ENCODE measurements at regions of chrX and their contacts with region 1.

Region 1: GRCh38 chrX:22135994-22136684 is 104.0 kb downstream of the PHEX start:
- DNase-seq: peak in 5 of 9 experiments; percentile 3 to 56 (median 25)
- ATAC-seq: no peak
- H3K4me3 ChIP-seq: no peak overlapping the region
- H3K4me3 Mint-ChIP-seq: peak overlapping the region; percentile 71
- H3K27ac ChIP-seq: no peak overlapping the region
- H3K27ac Mint-ChIP-seq: no peak overlapping the region
- H3K4me1 ChIP-seq: no peaks in the 10 kb centered on the region
- H3K4me1 Mint-ChIP-seq: peaks cover 9% of the 10 kb centered on the region
- H3K27me3 ChIP-seq: no peaks in the 10 kb centered on the region
- H3K27me3 Mint-ChIP-seq: no peaks in the 10 kb centered on the region
- CTCF ChIP-seq: peak; percentile 57

Region 2: DNA sequence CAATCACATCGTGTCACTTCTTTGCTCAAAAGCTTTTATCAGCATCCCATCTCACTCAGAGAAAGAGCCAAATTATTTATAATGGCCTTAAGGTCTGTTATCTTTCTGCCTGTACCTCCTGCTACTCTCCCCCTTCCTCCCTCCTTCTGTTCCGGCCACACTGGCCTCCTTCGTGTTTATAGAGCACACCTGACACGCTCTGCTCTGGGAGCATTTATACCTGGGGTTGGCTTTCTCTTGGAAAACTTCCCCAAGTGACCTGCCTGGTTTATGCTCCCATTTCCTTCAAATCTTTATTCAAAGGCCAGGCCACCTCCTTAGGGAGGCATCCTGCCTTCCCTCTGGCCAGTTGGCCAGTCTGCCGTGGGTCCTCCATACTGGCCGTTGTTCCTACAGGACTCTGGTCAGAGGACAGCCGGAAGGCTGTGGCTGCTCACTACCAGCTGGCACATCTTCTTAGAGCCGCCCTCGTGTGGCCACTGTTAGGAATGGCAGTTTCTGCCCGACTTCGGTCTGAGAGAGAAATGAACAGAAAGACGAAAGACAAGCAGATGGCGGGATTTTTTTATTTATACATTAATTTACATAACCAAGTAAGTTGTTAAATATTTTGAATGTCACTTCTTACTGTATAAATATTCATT is 56.4 kb after region 1 on chrX:
- CTCF ChIA-PET with region 1: interaction called, 8 read pairs
- POLR2A ChIA-PET with region 1: no interaction called
- intact Hi-C with region 1: loop called (anchors 1 to 5 kb)
- DNase-seq: peak; percentile 1 to 65 (median 39)
- ATAC-seq: peak; percentile 63
- H3K4me3 ChIP-seq: no peak overlapping the region
- H3K4me3 Mint-ChIP-seq: no peak overlapping the region
- H3K27ac ChIP-seq: no peak overlapping the region
- H3K27ac Mint-ChIP-seq: no peak overlapping the region
- H3K4me1 ChIP-seq: no peaks in the 10 kb centered on the region
- H3K4me1 Mint-ChIP-seq: peaks cover 3% of the 10 kb centered on the region
- H3K27me3 ChIP-seq: no peaks in the 10 kb centered on the region
- H3K27me3 Mint-ChIP-seq: peaks cover 2% of the 10 kb centered on the region
- CTCF ChIP-seq: peak; percentile 69

Region 3: GRCh38 chrX:22748093-22748999 is 612.2 kb after region 1 on chrX:
- CTCF ChIA-PET with region 1: interaction called, 4 read pairs
- POLR2A ChIA-PET with region 1: no interaction called
- intact Hi-C with region 1: loop called in 1 of 2 experiments (anchors 5 kb)
- DNase-seq: peak in 8 of 9 experiments; percentile 0 to 52 (median 23)
- ATAC-seq: peak; percentile 31
- H3K4me3 ChIP-seq: no peak overlapping the region
- H3K4me3 Mint-ChIP-seq: no peak overlapping the region
- H3K27ac ChIP-seq: no peak overlapping the region
- H3K27ac Mint-ChIP-seq: no peak overlapping the region
- H3K4me1 ChIP-seq: no peaks in the 10 kb centered on the region
- H3K4me1 Mint-ChIP-seq: no peaks in the 10 kb centered on the region
- H3K27me3 ChIP-seq: no peaks in the 10 kb centered on the region
- H3K27me3 Mint-ChIP-seq: no peaks in the 10 kb centered on the region
- CTCF ChIP-seq: peak; percentile 57

Region 4: GRCh38 chrX:23901805-23902204 is 1765.7 kb after region 1 on chrX:
- CTCF ChIA-PET with region 1: no interaction called
- POLR2A ChIA-PET with region 1: no interaction called
- intact Hi-C with region 1: loop called (anchors 5 to 10 kb)
- DNase-seq: peak in 6 of 9 experiments; percentile 6 to 66 (median 34)
- ATAC-seq: peak; percentile 80
- H3K4me3 ChIP-seq: no peak overlapping the region
- H3K4me3 Mint-ChIP-seq: no peak overlapping the region
- H3K27ac ChIP-seq: no peak overlapping the region
- H3K27ac Mint-ChIP-seq: no peak overlapping the region
- H3K4me1 ChIP-seq: peaks cover 6% of the 10 kb centered on the region
- H3K4me1 Mint-ChIP-seq: peaks cover 5% of the 10 kb centered on the region
- H3K27me3 ChIP-seq: no peaks in the 10 kb centered on the region
- H3K27me3 Mint-ChIP-seq: no peaks in the 10 kb centered on the region
- CTCF ChIP-seq: no peak

Measured in CD8-positive, alpha-beta T cell (primary cell).